ENCODE measurements at regions of chr18 and their contacts with region 1.

Region 1: GRCh38 chr18:23406271-23406787 is 46.8 kb upstream of the RIOK3 start:
- DNase-seq: no peak
- ATAC-seq: no peak
- H3K4me3 ChIP-seq: no peak overlapping the region
- H3K4me3 Mint-ChIP-seq: no peak overlapping the region
- H3K27ac ChIP-seq: no peak overlapping the region
- H3K27ac Mint-ChIP-seq: no peak overlapping the region
- H3K4me1 ChIP-seq: no peaks in the 10 kb centered on the region
- H3K4me1 Mint-ChIP-seq: peaks cover 0 to 7% (median 1%) of the 10 kb centered on the region in 7 donors
- H3K27me3 ChIP-seq: no peaks in the 10 kb centered on the region
- H3K27me3 Mint-ChIP-seq: no peaks in the 10 kb centered on the region

Region 2: DNA sequence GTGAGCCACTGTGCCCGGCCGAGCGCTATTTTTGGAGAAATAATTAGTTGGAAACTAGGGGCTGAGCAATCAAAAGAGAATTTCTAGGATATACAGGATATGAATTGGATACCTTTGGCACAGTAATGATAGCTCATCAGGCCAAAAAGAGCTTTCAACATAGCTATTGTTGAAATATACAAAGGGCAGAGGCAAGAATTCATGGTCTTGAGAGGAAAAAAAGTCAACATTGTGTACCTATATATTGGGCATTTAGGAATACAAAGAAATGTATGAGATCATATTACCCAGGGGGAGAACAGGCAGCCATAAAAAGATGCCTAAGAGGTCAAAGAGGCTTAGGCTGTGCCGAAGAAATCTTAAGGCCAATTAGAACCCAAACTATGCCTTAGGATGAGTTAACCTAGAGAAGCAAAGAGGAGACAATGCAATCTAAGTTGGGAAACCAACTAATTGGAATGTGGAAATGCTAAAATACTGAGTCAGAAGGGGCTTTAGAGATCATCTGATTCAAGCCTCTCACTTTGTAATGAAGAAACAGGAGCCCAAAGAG is 374.2 kb before region 1 on chr18:
- CTCF ChIA-PET with region 1: interaction called, 23 read pairs
- POLR2A ChIA-PET with region 1: no interaction called
- intact Hi-C with region 1: loop called in 1 of 2 experiments (anchors 2 kb)
- DNase-seq: no peak
- ATAC-seq: no peak
- H3K4me3 ChIP-seq: no peak overlapping the region
- H3K4me3 Mint-ChIP-seq: no peak overlapping the region
- H3K27ac ChIP-seq: no peak overlapping the region
- H3K27ac Mint-ChIP-seq: peak overlapping the region in 2 of 9 donors; percentile 51
- H3K4me1 ChIP-seq: no peaks in the 10 kb centered on the region
- H3K4me1 Mint-ChIP-seq: peaks cover 0 to 12% (median 8%) of the 10 kb centered on the region in 7 donors
- H3K27me3 ChIP-seq: no peaks in the 10 kb centered on the region
- H3K27me3 Mint-ChIP-seq: no peaks in the 10 kb centered on the region

Measured in naive thymus-derived CD4-positive, alpha-beta T cell (primary cell).